Sciatic nerve (tissue), 2 donors: ENCODE measurements at regions of chr4 and their contacts with region 1.

Region 1: DNA sequence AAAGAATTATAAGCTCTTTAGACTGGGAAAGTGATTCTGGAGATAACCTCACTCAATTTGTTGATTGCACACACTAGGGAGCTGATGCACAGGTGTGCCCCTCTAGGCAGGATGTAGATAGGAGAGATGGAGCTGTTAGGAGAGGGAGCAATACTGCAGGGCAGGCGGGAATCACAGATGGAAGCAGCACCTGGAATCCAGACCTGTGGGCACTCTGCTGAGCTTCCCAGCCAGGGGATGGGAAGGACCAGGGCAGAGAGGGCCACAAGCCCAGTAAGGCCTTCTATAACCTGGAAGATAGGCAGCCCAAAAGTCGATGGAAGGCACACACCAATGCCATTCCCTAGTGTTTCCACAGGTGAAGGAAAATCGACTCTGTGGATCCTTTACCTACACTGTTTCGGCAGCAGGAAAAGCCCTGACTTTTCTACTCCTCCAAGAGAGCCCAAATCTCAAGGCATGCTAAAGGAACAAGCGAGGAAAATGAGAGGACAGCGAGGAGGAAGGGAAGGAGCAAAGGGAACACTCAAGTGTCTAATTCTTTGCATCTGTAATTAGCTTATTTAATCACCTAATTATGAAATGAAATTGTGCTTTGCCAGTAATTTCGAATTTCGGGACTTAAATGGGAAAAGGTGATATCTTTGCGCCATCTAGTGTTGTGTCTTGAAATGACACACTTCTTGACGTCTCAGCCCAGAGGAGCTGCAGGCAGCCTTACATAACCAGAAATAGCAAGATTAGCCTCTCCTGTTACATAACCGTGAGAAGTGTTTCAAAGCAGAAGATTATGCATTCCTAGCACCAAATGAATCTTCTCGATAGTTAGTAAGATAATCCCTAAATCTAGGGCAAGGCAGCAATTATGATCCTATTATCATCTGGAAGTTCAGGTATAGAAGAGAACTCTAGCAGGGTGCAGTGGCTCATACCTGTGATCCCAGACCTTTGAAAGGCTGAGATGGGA is 31.0 kb upstream of the TLR3 start:
- DNase-seq: no peak
- ATAC-seq: peak; percentile 95

Region 2: GRCh38 chr4:185640811-185641675 is 396.9 kb before region 1 on chr4:
- intact Hi-C with region 1: loop called (anchors 5 kb)
- DNase-seq: no peak
- ATAC-seq: peak; percentile 50

Region 3: GRCh38 chr4:186272699-186273391 is 234.9 kb after region 1 on chr4:
- intact Hi-C with region 1: no loop called
- DNase-seq: no peak
- ATAC-seq: no peak